Heart right ventricle (tissue), 16 donors: ENCODE measurements at regions of chr5 and their contacts with region 1.

Region 1: GRCh38 chr5:129094087-129094923 is at the start of gene ISOC1:
- DNase-seq: peak; percentile 91 to 95
- ATAC-seq: peak; percentile 92 to 98 (median 96)
- H3K4me3 ChIP-seq: peak within 1 kb of the TSS; percentile 75 to 97 (median 92)
- H3K27ac ChIP-seq: peak within 1 kb of the TSS; percentile 73 to 95 (median 92)
- H3K4me1 ChIP-seq: peaks cover 0 to 50% (median 37%) of the 10 kb centered on the region in 9 donors
- H3K27me3 ChIP-seq: no peaks in the 10 kb centered on the region
- CTCF ChIP-seq: peak in 2 of 9 donors; percentile 18 to 23
- total RNA-seq, gene ISOC1: 59.6 to 102 (median 81.0) TPM

Region 2: GRCh38 chr5:128538250-128539037 is 555.9 kb before region 1 on chr5:
- intact Hi-C with region 1: loop called in 1 of 10 experiments (anchors 10 kb)
- DNase-seq: peak; percentile 81 to 86
- ATAC-seq: peak; percentile 78 to 90 (median 84)
- H3K4me3 ChIP-seq: peak overlapping the region; percentile 29 to 71 (median 64)
- H3K27ac ChIP-seq: peak overlapping the region in 8 of 10 donors; percentile 49 to 78 (median 66)
- H3K4me1 ChIP-seq: peaks cover 0 to 23% (median 16%) of the 10 kb centered on the region in 9 donors
- H3K27me3 ChIP-seq: peaks cover 0 to 48% (median 39%) of the 10 kb centered on the region in 7 donors
- CTCF ChIP-seq: no peak

Region 3: GRCh38 chr5:128885649-128886255 is 208.6 kb before region 1 on chr5:
- intact Hi-C with region 1: no loop called
- DNase-seq: no peak
- ATAC-seq: peak in 2 of 8 donors; percentile 39 to 42
- H3K4me3 ChIP-seq: no peak overlapping the region
- H3K27ac ChIP-seq: peak overlapping the region in 2 of 10 donors; percentile 20 to 40
- H3K4me1 ChIP-seq: peaks cover 0 to 10% (median 0%) of the 10 kb centered on the region in 9 donors
- H3K27me3 ChIP-seq: no peaks in the 10 kb centered on the region
- CTCF ChIP-seq: no peak

Region 4: DNA sequence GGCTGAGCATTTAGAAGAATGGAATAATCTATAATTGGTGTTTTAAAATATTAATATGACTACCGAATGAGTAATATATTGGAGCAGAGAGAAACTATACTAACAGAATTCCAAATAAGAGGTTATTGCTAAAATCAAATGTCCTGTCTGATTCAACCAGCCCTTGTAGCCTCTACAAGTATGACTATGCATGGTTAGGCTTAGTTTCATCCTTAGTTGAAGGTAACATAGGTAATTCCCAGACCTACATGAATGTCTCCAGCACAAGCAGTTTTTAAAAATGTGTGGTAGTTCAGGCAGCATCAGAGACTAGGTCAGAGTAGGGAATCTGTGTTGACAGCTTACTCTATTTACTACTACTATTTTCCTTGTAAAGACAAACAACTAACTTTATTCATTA is 180.8 kb before region 1 on chr5:
- intact Hi-C with region 1: loop called in 2 of 10 experiments (anchors 10 kb)
- DNase-seq: no peak
- ATAC-seq: no peak
- H3K4me3 ChIP-seq: no peak overlapping the region
- H3K27ac ChIP-seq: no peak overlapping the region
- H3K4me1 ChIP-seq: peaks cover 0 to 4% (median 0%) of the 10 kb centered on the region in 9 donors
- H3K27me3 ChIP-seq: no peaks in the 10 kb centered on the region
- CTCF ChIP-seq: no peak

Region 5: DNA sequence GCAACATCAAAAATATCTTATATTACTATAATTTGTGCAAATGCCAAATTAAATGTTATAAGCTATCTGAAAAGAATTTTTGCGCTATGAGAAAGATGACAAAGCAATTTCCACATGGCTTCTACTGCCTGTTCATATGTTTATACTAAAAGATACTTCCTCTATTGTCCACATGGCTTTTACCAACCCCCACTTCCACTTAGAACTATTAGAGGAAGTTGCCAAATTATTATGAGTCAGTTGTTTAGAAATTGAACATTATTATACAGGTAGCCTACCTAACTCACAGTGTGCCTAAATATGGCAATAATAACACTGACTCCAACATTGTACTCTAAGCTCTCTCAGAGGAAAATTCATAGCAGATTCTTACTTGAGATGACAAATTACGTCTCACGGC is 166.7 kb before region 1 on chr5:
- intact Hi-C with region 1: loop called in 1 of 10 experiments (anchors 5 kb)
- DNase-seq: no peak
- ATAC-seq: peak in 1 of 8 donors; percentile 36
- H3K4me3 ChIP-seq: no peak overlapping the region
- H3K27ac ChIP-seq: no peak overlapping the region
- H3K4me1 ChIP-seq: peaks cover 0 to 11% (median 3%) of the 10 kb centered on the region in 9 donors
- H3K27me3 ChIP-seq: no peaks in the 10 kb centered on the region
- CTCF ChIP-seq: no peak

Region 6: DNA sequence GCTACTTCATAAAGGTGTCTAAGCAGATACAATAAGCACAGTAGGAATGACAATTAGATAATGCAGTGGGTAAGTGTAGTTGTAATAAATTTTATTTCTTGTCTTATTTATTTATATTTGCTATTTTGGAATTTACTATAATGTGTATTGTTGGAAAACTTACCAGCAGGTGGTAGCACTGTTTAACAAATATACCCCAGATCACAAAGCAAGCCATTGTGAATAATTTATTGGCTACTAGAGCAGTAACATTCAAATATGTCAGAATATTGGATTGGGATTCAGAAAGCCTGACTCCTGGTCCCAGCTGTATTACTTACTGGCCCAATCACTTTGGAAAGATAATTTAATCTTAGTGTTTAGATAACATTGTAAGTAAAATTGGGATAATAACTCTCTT is 78.3 kb after region 1 on chr5:
- intact Hi-C with region 1: no loop called
- DNase-seq: no peak
- ATAC-seq: peak in 6 of 8 donors; percentile 39 to 71 (median 55)
- H3K4me3 ChIP-seq: no peak overlapping the region
- H3K27ac ChIP-seq: no peak overlapping the region
- H3K4me1 ChIP-seq: peaks cover 0 to 6% (median 0%) of the 10 kb centered on the region in 9 donors
- H3K27me3 ChIP-seq: no peaks in the 10 kb centered on the region
- CTCF ChIP-seq: peak in 7 of 9 donors; percentile 17 to 46 (median 35)